ENCODE measurements at regions of chr7 and their contacts with region 1.

Region 1: DNA sequence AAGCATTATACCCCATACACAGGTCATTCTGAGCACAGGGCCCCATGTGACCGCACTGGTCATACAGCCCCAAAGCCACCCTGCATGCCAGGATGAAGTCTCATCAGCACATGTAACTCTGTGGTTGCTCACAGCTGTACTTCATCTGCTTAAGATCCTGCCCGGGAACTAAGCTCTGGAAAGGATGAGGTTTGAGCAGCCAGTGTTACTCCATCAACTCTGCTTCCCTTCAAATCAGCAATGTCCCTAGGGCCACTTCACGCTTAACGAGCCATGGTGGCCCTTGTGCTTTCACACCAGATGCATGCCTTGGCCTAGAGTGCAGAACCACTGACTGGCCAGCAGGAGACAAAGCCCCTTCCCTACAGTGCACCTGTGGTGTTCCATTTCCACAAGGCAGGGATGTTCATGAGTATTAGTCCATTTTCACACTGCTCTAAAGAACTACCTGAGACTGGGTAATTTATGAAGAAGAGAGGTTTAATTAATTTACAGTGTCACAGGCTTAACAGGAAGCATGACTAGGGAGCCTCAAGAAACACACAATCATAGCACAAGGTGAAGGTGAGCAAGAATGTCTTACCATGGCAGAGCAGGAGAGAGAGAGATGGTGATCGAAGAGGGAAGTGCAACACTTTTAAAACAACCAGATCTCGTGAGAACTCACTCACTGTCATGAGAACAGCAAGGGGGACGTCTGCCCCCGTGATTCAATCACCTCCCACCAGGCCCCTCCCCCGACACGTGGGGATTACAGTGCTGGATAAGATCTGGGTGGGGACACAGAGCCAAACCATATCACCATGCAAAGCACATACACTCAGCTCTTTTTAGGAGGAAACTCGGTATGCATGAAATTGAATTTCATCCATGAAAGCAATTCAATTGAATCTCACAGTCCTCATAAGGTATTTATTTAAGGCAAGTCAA is 149.0 kb upstream of the CDCA7L start:
- H3K4me3 ChIP-seq: no peak overlapping the region
- H3K27ac ChIP-seq: no peak overlapping the region
- H3K4me1 ChIP-seq: no peaks in the 10 kb centered on the region
- CTCF ChIP-seq: no peak

Region 2: DNA sequence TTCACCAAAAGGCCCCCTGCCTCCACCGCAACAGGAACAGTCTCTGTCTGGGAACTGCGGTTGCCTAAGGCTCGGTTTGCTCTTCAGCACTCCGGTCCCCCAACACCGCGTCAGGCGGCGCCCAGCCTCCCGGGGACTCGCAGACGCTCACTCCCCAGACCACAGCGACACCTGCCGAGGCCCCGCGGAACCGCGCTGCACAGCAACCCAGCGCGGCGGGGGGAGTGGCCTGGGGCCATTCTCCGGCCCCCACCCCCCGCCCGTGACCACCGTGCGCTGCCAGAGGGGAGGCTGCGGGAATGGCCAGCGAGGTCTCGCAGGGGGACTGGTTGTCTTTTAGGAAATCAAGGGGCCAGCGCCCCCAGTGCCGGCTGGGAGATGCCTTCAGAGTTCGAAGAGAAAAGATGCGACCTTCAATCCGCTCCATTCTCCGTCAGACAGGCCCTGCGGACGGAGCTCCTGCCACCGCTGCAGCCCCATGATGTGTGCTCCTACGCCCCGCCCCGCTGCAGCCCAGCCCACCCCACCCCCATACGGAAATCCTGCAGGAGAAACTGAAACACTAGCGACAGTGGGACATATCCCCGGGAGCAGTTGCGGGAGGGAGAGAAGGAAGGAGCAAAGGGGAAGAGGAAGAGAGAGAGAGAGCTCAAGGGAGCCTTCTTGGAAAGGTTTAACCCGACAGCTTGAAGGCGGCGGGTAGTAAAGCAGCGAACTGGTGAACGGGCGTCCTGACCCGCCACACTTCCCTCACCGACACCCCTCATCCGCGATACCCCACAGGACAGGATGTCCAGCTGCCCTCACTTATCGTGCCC is 11.6 kb before region 1 on chr7:
- CTCF ChIA-PET with region 1: interaction called, 18 read pairs
- POLR2A ChIA-PET with region 1: no interaction called
- H3K4me3 ChIP-seq: peak overlapping the region; percentile 63
- H3K27ac ChIP-seq: peak overlapping the region; percentile 47; the same call in 1 of the 2 replicates
- H3K4me1 ChIP-seq: 0 out of 2 replicates have a peak, but pooled peaks cover 3% of the 10 kb centered on the region
- CTCF ChIP-seq: peak; percentile 99

Measured in HEK293 (cell line).